CD8-positive, alpha-beta T cell (primary cell): ENCODE measurements at regions of chr5 and their contacts with region 1.

Region 1: GRCh38 chr5:141650851-141651727 is at the start of gene FCHSD1:
- DNase-seq: peak; percentile 70 to 89 (median 81)
- ATAC-seq: peak; percentile 92
- H3K4me3 ChIP-seq: peak within 1 kb of the TSS; percentile 64
- H3K4me3 Mint-ChIP-seq: peak within 1 kb of the TSS; percentile 89
- H3K27ac ChIP-seq: peak within 1 kb of the TSS; percentile 63 to 73
- H3K27ac Mint-ChIP-seq: peak within 1 kb of the TSS; percentile 87
- H3K4me1 ChIP-seq: peaks cover 20% of the 10 kb centered on the region
- H3K4me1 Mint-ChIP-seq: peaks cover 52% of the 10 kb centered on the region
- H3K27me3 ChIP-seq: no peaks in the 10 kb centered on the region
- H3K27me3 Mint-ChIP-seq: no peaks in the 10 kb centered on the region
- CTCF ChIP-seq: no peak
- total RNA-seq, gene FCHSD1: 95.8 to 101 TPM

Region 2: DNA sequence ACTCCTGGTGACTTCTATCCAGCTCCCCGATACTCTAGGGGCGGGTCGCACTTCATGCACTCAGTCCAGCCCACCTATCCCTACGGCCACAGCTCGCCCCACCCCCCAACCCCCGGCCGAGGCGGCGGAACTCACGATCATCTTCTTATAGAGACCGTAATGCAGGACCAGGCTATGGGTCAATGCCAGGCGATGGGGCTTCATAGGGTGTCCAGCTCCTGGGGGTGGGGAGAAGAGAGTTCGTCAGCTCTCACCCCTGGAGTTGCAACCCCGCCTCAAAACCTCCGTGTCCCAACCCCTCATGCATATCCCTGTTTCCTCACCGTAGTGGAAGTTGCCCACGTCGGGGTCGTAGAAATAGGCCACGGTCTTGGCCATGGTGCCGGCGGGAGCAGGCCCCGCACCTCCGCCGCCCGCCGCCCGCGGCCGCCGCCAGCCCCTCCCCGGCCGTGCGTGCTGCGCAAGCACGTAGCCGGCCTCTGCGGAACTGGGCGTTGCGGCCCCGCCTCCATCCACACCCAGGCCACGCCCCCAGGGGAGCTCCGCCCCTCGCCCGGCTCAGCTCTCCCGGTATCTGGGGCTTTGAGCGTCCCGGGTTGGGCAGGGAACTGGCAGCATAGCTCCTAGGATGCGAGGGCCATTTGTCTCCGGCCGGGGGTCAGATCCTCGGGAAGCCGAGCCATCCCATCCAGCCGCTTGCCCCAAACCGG is 14.5 kb before region 1 on chr5 and contains the starts of genes HDAC3 and RELL2:
- CTCF ChIA-PET with region 1: interaction called, 10 read pairs
- POLR2A ChIA-PET with region 1: interaction called, 68 read pairs
- intact Hi-C with region 1: loop called (anchors 1 kb)
- DNase-seq: peak; percentile 88 to 97 (median 94)
- ATAC-seq: peak; percentile 89
- H3K4me3 ChIP-seq: peak within 1 kb of the TSS; percentile 98 to 99
- H3K4me3 Mint-ChIP-seq: peak within 1 kb of the TSS; percentile 92
- H3K27ac ChIP-seq: peak within 1 kb of the TSS; percentile 78 to 81
- H3K27ac Mint-ChIP-seq: peak within 1 kb of the TSS; percentile 89
- H3K4me1 ChIP-seq: peaks cover 28% of the 10 kb centered on the region
- H3K4me1 Mint-ChIP-seq: peaks cover 50% of the 10 kb centered on the region
- H3K27me3 ChIP-seq: no peaks in the 10 kb centered on the region
- H3K27me3 Mint-ChIP-seq: no peaks in the 10 kb centered on the region
- CTCF ChIP-seq: no peak
- total RNA-seq, gene HDAC3: 48.9 to 54.8 TPM
- total RNA-seq, gene RELL2: 9.5 to 9.8 TPM

Region 3: GRCh38 chr5:141681695-141682641 is 30.9 kb after region 1 on chr5 and contains the start of gene ARAP3:
- CTCF ChIA-PET with region 1: no interaction called
- POLR2A ChIA-PET with region 1: interaction called, 11 read pairs
- intact Hi-C with region 1: loop called in 1 of 2 experiments (anchors 2 kb)
- DNase-seq: peak in 7 of 9 experiments; percentile 30 to 78 (median 49)
- ATAC-seq: peak; percentile 54
- H3K4me3 ChIP-seq: peak within 1 kb of the TSS; percentile 55 to 56
- H3K4me3 Mint-ChIP-seq: peak within 1 kb of the TSS; percentile 76
- H3K27ac ChIP-seq: peak within 1 kb of the TSS in 1 of 2 experiments; percentile 34
- H3K27ac Mint-ChIP-seq: peak within 1 kb of the TSS; percentile 49
- H3K4me1 ChIP-seq: peaks cover 30% of the 10 kb centered on the region
- H3K4me1 Mint-ChIP-seq: peaks cover 28% of the 10 kb centered on the region
- H3K27me3 ChIP-seq: no peaks in the 10 kb centered on the region
- H3K27me3 Mint-ChIP-seq: no peaks in the 10 kb centered on the region
- CTCF ChIP-seq: no peak
- total RNA-seq, gene ARAP3: 0.73 to 1.2 TPM

Region 4: DNA sequence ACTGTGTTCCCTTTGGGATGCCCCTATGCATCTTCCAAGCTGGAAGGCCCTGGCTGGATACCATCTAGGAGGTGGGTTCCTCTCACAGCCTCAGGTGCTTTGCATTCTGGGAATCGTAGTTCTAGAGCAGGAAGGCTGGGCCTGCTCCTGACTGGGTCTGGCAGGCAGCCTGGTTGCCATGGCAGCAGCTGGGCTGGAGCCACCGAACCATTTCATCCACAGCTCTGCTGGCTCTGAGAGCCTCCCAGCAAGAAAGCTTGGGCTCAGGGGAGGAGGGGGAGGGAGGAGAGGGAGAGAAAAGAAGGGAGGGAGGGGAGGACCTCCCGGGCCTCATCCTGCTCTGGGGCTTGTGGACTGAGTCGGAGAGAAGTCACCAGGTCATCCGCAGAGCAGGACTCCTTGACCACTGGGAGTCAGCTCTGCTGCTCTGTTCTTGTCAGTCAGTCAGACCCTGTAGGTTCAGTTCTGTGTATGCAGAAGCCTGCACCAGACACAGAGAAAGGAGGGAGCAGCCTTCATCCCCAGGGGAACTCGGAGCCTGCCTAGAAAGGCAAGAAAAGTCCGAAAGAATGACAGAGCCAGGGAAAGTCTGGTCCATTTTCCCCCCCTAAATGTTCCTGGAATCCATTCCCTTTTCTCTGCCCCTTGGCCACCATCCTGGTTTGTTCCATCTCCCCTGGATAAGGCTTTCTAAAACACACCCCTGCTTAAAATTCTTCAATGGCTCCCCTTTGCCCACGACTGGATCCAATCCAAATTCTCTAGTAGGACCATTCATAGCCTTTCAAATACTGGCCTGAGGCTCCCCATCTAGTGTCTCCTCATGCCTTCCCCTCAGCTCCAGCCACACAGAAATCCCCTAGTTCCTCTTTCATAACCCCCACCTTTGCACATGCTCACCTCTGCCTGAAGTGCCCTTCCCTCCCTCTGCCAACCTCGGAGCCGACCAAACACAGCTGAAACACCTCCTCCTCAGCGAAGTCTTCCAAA is 96.4 kb after region 1 on chr5:
- CTCF ChIA-PET with region 1: no interaction called
- POLR2A ChIA-PET with region 1: no interaction called
- intact Hi-C with region 1: no loop called
- DNase-seq: peak in 1 of 9 experiments; percentile 7
- ATAC-seq: no peak
- H3K4me3 ChIP-seq: no peak overlapping the region
- H3K4me3 Mint-ChIP-seq: no peak overlapping the region
- H3K27ac ChIP-seq: no peak overlapping the region
- H3K27ac Mint-ChIP-seq: no peak overlapping the region
- H3K4me1 ChIP-seq: no peaks in the 10 kb centered on the region
- H3K4me1 Mint-ChIP-seq: no peaks in the 10 kb centered on the region
- H3K27me3 ChIP-seq: peaks cover 0 to 9% of the 10 kb centered on the region in 2 experiments
- H3K27me3 Mint-ChIP-seq: peaks cover 71% of the 10 kb centered on the region
- CTCF ChIP-seq: no peak

Region 5: DNA sequence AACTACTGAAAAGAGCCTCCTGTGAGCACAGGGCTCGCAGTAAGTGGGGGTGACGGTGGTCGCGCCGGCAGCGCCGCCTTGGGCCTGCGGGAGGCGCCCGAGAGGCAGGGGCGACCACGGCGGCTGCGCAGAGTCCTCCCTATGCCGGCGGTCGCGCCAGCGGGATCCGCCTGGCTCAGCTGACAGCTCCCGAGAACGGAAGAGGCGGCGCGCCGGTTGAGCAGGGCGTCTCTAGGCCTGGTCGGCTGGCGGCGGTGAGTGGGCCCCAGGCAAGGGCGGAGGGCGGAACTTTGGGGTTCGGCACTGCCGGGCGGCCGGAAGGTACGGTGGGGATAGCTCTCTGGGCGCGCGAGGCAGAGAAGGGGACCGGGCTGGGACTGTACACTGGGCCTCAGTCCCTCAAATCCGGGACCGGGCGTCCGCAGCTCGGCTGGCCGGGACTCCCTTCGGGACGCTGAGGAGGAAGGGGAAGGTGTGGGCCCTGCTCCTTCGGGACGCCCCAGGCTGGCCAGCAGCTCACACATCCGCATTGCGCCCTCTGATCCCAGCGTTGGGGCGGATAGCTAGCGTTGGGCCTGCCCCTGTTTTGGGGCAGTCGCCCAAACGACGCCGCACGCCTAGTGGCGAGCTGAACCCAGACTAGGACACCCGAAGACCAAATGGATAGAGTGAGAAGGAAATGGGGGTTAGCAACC is 318.0 kb after region 1 on chr5 and contains the start of gene RNF14:
- CTCF ChIA-PET with region 1: no interaction called
- POLR2A ChIA-PET with region 1: interaction called, 3 read pairs
- intact Hi-C with region 1: loop called in 1 of 2 experiments (anchors 1 kb)
- DNase-seq: peak; percentile 86 to 97 (median 92)
- ATAC-seq: peak; percentile 94
- H3K4me3 ChIP-seq: peak within 1 kb of the TSS; percentile 77 to 94
- H3K4me3 Mint-ChIP-seq: peak within 1 kb of the TSS; percentile 98
- H3K27ac ChIP-seq: peak within 1 kb of the TSS; percentile 80 to 97
- H3K27ac Mint-ChIP-seq: peak within 1 kb of the TSS; percentile 99
- H3K4me1 ChIP-seq: peaks cover 18% of the 10 kb centered on the region
- H3K4me1 Mint-ChIP-seq: peaks cover 27% of the 10 kb centered on the region
- H3K27me3 ChIP-seq: no peaks in the 10 kb centered on the region
- H3K27me3 Mint-ChIP-seq: no peaks in the 10 kb centered on the region
- CTCF ChIP-seq: peak; percentile 98
- total RNA-seq, gene RNF14: 11.3 to 12.8 TPM